ENCODE measurements at regions of chr10 and their contacts with region 1.

Region 1: DNA sequence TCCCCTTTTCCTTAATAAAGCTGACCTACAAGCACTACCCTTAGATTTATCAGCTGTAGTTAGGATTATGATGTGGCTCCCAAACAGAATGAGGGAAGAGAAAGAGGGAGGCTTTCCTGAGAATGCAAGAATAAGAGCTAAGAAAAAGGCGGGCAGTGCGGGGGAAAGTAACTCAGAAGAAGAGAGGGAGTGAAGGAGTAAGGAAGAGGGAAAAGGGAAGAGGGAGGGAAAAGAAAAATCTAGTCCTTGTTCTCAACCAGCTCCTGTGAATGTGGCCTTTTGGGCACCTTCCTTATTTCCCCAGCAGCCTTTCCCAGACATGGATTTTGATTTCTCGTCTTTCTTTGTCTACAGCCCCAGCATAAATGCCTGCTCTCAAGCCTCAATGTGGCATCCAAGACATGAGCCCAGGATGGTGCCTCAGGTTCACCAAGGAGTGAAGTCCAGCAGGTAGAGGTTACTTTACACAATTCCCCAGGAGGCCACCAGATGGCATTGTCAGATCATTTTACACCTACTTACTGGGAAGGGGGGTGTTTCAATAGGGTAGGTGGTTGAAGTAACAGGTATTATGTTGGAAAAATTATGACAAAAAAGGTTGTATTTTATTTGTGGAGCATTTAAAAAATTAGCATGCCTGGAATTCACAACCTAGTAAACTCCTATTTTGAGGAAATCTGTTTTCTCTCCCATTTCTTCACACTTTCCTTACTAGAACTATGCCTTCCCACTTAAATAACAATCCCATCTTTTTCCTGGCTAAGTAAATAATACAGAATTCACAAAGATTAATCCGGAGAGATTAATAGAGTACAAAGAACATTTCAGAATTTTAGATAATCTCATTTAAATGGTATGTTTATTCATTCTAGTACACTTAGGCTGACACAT is 106.5 kb downstream of the HTR7 start:
- DNase-seq: peak; percentile 50
- ATAC-seq: no peak
- H3K4me3 Mint-ChIP-seq: no peak overlapping the region
- H3K27ac Mint-ChIP-seq: no peak overlapping the region
- H3K4me1 Mint-ChIP-seq: no peaks in the 10 kb centered on the region
- H3K27me3 Mint-ChIP-seq: peaks cover 20% of the 10 kb centered on the region

Region 2: GRCh38 chr10:90865401-90865800 is 114.0 kb after region 1 on chr10:
- CTCF ChIA-PET with region 1: interaction called, 11 read pairs
- POLR2A ChIA-PET with region 1: no interaction called
- DNase-seq: no peak
- ATAC-seq: no peak
- H3K4me3 Mint-ChIP-seq: no peak overlapping the region
- H3K27ac Mint-ChIP-seq: no peak overlapping the region
- H3K4me1 Mint-ChIP-seq: peaks cover 2% of the 10 kb centered on the region
- H3K27me3 Mint-ChIP-seq: peaks cover 62% of the 10 kb centered on the region

Region 3: GRCh38 chr10:90977162-90977854 is 226.0 kb after region 1 on chr10:
- CTCF ChIA-PET with region 1: no interaction called
- POLR2A ChIA-PET with region 1: no interaction called
- DNase-seq: no peak
- ATAC-seq: no peak
- H3K4me3 Mint-ChIP-seq: no peak overlapping the region
- H3K27ac Mint-ChIP-seq: no peak overlapping the region
- H3K4me1 Mint-ChIP-seq: no peaks in the 10 kb centered on the region
- H3K27me3 Mint-ChIP-seq: peaks cover 7% of the 10 kb centered on the region

Measured in activated CD8-positive, alpha-beta T cell treated with anti-CD3 and anti-CD28 coated beads, Interleukin-2, amount 10 ng/mL, durations not matched to agents 7 days and 5 days (primary cell).